WTC11 (cell line): ENCODE measurements at regions of chr1 and their contacts with region 1.

Region 1: GRCh38 chr1:156489166-156489934 is 11.2 kb downstream of the MEF2D start:
- DNase-seq: peak; percentile 60
- ATAC-seq: peak; percentile 50
- H3K4me3 Mint-ChIP-seq: peak overlapping the region; percentile 54
- H3K27ac Mint-ChIP-seq: peak overlapping the region; percentile 70
- H3K4me1 Mint-ChIP-seq: peaks cover 60% of the 10 kb centered on the region
- H3K27me3 Mint-ChIP-seq: no peaks in the 10 kb centered on the region
- CTCF ChIP-seq: no peak

Region 2: DNA sequence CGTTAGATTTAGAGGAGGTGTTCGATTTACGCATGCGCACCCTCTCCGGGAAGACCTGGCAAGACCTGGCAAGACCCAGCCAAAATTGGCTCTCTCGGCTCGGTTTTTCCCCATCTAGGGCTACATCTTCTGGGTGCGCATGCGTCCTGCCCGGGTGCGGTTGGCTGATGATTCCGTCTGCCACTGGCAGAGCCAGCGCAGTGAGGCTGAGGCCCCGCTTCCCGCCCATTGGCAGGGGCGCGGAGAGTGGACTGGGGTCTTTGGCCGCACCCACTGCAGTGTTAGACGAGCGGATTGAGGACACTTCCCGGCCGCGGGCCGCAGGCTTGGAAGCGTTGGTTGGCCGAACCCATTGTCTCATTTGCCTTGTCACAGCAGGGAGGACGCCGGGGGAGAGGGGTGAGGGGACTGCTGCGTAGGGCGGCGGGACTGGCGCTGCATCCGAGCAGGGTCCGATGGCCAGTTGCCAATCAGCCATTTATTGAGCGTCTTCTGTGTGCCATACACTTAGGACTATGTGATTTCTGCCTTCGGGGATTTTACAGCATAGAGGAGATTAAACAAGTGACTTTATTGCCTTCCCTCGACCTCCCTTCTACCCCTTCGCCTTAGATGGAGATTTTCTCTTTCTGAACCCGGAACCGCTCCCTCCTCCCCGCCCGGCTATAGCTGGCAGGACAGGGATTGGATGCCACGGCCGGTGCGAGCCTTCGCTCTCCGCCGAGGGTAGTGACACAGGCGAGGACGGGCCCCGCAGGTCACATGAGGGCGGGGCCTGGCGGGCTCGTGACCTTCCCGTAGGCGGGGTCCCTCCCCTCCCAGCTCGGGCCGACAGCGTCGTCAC is 32.5 kb before region 1 on chr1:
- CTCF ChIA-PET with region 1: interaction called, 19 read pairs
- POLR2A ChIA-PET with region 1: interaction called, 4 read pairs
- DNase-seq: peak; percentile 97
- ATAC-seq: peak; percentile 84
- H3K4me3 Mint-ChIP-seq: peak overlapping the region; percentile 89
- H3K27ac Mint-ChIP-seq: peak overlapping the region; percentile 99
- H3K4me1 Mint-ChIP-seq: peaks cover 15% of the 10 kb centered on the region
- H3K27me3 Mint-ChIP-seq: no peaks in the 10 kb centered on the region
- CTCF ChIP-seq: no peak

Region 3: DNA sequence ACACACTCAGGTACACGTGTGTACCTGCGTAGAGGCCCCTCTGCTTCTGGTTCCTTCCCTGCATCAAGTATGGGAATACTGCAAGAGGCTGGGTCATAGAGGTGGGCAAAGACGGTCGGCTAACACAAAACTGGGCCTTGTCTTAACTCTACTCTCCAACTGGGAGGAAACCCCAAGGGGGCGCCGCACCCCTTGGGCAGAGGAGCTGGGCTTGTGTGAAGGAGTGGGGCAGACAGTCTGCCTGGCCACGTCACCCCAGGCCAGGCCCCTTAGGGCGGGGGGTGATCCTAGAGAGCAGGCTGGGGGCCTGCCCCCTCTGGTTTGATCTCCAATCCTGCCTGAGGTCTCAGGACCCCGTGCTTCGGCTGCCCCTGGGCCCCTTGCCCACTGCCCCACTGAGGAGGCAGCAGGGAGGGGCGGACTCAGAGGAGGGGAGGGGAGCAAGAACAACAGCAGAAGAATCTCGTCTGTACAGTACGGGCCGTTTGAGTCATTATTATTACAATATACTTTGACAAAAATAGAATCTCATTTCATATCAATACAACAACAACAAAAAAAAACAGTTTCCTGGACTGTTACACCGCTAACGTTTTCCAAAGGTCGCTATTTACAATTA is 23.5 kb before region 1 on chr1:
- CTCF ChIA-PET with region 1: interaction called, 16 read pairs
- POLR2A ChIA-PET with region 1: no interaction called
- DNase-seq: peak; percentile 66
- ATAC-seq: peak; percentile 75
- H3K4me3 Mint-ChIP-seq: no peak overlapping the region
- H3K27ac Mint-ChIP-seq: peak overlapping the region; percentile 56
- H3K4me1 Mint-ChIP-seq: peaks cover 42% of the 10 kb centered on the region
- H3K27me3 Mint-ChIP-seq: no peaks in the 10 kb centered on the region
- CTCF ChIP-seq: no peak

Region 4: DNA sequence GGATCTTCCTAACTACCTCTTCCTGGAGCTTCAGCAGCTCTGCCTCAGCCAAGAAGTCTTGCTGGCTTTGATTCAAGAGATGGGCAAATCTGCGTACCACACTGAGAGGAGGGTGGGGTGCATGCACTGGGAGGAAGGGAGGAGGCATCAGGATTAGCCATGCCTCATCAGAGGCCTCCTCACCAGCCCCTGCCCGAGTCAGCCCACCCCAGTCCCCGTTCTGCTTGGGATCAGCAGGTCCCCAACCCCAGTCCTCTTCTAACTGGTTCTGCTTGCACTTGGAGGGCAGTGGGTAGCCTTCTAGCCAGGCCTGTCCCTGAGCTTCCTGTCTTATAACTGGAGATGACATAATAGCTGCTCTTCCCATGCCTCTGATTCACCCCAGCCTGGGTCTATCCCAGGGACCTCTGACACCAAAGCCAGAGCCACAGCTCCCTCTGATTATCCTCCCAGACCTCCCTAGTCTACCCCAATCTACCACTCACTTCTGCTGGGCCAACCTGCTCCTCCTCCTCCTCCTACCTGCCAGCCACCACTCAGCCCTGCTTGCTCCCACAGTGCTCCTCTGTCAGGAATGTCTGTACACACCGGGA is 51.5 kb after region 1 on chr1:
- CTCF ChIA-PET with region 1: no interaction called
- POLR2A ChIA-PET with region 1: no interaction called
- DNase-seq: no peak
- ATAC-seq: no peak
- H3K4me3 Mint-ChIP-seq: no peak overlapping the region
- H3K27ac Mint-ChIP-seq: no peak overlapping the region
- H3K4me1 Mint-ChIP-seq: peaks cover 9% of the 10 kb centered on the region; the same call in 1 of the 2 replicates
- H3K27me3 Mint-ChIP-seq: no peaks in the 10 kb centered on the region
- CTCF ChIP-seq: no peak